Thyroid gland (tissue), 4 donors: ENCODE measurements at regions of chr1 and their contacts with region 1.

Region 1: DNA sequence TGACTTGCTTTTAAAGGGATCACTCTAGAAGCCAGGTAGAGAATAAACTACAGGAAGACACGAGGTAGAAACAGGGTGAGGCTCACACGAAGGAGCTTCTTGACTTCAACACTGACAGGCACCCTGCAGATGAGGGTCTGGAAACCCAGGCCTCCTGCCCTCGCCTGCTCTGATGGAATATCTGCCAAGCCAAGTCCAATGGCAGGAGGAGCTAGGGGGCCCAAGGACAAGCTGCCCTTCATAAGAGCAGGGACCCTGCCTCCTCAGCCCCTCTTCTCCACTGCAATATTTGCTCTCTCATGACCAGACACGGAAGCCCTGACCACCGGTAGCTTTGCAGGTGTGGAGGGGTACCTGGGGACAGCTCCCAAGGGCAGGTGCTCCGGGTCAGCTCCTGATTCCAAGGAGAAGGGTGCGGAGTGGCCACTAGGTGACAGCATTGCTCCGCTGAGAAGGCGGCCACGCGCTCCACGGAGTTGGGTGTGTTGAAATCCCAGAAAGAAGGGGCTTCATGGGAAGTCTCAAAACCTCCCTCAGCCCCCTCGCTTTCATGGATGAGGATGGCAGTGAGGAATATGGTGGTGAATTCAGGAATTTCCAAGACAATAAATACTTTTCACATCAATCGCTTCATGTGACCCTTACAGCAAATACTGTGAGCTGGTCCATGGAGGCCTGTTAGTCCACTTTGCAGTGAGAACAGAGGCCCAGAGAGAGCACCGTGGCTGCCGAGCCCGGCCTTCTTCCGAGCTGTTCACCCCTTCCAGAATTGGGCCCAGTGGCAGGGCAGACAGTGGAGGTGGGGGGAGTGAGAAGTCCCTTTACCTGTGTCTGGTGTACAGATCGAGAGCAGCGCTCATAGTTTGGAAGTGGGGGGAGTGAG is 33.2 kb upstream of the PAX7 start:
- DNase-seq: peak; percentile 58 to 62
- H3K4me3 ChIP-seq: no peak overlapping the region
- H3K27ac ChIP-seq: no peak overlapping the region
- H3K4me1 ChIP-seq: no peaks in the 10 kb centered on the region
- H3K27me3 ChIP-seq: no peaks in the 10 kb centered on the region
- CTCF ChIP-seq: peak; percentile 88 to 98 (median 92)
- POLR2A ChIP-seq: no peak

Region 2: GRCh38 chr1:18556364-18556763 is 41.0 kb before region 1 on chr1:
- intact Hi-C with region 1: no loop called
- DNase-seq: no peak
- H3K4me3 ChIP-seq: no peak overlapping the region
- H3K27ac ChIP-seq: no peak overlapping the region
- H3K4me1 ChIP-seq: no peaks in the 10 kb centered on the region
- H3K27me3 ChIP-seq: peaks cover 14% of the 10 kb centered on the region
- CTCF ChIP-seq: peak in 1 of 6 experiments; percentile 34
- POLR2A ChIP-seq: no peak

Region 3: DNA sequence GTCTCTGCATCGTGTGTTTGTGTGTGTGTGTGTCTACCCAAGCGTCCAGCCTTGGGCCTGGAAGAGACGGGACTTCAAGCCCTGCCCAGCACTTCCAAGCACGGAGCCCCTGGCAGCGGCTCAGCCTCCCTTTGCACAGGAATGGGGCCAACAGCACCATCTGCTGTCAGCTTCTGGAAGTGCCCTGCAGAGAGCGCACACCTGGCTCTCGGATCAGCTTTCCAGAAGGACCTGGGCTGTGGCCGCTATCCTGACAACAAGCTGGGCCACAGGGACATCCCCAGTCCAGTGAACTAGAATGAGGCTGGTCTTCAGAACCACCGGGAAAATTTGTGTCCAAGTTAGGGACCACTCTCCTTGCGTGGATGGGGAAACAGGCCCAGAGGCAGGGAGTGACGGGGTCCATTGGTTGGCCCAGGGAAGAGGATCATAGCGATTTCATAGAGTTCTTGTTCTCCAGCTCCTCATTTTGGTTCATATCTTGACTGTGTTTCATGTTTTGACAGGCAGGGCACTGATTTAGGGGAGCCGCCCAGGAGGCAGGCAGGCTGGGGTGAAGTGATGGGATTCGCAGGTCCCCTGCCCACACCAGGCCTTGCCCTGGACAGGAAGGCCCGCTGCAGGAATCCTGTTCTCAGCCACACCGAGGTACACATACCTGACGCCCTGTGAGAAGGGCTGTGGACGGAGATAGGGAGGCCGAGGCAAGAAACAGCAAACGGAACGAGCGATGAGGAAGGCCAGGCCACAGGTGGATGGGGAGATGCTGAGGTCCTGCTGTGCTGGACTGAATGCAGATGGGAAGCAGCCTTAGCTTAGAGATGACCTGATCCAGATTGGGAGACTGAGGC is 223.6 kb after region 1 on chr1:
- intact Hi-C with region 1: loop called (anchors 2 kb)
- DNase-seq: peak; percentile 91 to 93
- H3K4me3 ChIP-seq: no peak overlapping the region
- H3K27ac ChIP-seq: no peak overlapping the region
- H3K4me1 ChIP-seq: no peaks in the 10 kb centered on the region
- H3K27me3 ChIP-seq: no peaks in the 10 kb centered on the region
- CTCF ChIP-seq: peak; percentile 64 to 96 (median 92)
- POLR2A ChIP-seq: no peak